ENCODE measurements at regions of chr6 and their contacts with region 1.

Region 1: DNA sequence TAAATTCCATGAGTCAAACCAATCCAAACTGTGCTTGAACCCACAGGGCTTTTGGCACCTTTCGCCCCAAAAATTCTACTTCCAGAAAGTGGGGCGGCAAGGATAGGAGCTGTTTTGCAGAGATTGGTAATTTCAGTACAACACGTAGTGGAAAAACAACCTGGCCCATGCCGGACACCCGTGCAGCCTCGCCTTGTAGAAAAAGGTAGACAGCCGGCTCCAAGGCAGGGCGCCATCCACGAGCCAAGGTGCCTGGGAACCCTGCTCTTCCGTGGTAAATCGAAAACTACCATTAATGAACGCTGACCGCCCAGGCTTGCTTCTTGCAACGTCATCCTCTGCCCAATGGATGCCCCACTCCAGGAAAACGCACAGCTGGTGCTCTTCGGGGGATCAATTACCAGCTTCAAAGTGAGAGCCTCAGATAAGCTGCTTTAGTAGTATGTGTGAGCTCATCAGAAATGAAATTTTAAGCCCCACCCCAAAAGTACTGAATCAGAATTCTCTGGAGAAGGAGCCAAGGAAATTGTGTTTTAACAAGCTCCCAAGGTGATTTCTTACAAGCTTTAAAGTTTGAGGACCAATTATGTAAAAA is 1.8 kb downstream of the OOEP start:
- DNase-seq: no peak

Region 2: DNA sequence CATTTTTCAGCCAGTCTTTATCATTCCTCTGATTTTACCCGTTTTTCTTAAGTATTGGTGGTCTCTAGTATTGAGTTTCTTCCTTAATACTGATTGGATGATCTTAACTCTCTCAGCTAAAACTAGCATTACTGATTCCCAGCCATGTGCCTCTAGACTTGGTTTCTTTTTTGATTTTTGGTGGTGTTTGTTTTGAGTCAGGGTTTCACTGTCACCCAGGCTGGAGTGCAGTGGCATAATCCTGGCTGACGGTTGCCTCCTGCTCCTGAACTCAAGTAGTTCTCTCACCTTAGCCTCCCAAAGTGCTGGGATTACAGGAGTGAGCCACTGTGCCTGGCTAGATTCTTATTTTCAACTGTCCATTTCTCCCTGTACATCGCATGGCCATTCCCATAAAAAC is 38.7 kb before region 1 on chr6:
- intact Hi-C with region 1: loop called in 1 of 2 experiments (anchors 1 kb)
- DNase-seq: no peak